Activated B cell treated with CpG ODN at 0.5 μM for 24 hours (primary cell): ENCODE measurements at regions of chr11 and their contacts with region 1.

Region 1: GRCh38 chr11:114439229-114440120 is at the start of gene REXO2:
- DNase-seq: peak; percentile 85
- ATAC-seq: peak; percentile 99
- H3K4me3 Mint-ChIP-seq: peak within 1 kb of the TSS; percentile 97
- H3K27ac Mint-ChIP-seq: peak within 1 kb of the TSS; percentile 87
- H3K4me1 Mint-ChIP-seq: peaks cover 17% of the 10 kb centered on the region
- H3K27me3 Mint-ChIP-seq: no peaks in the 10 kb centered on the region
- CTCF ChIP-seq: no peak
- total RNA-seq, gene REXO2: 26.1 and 27.3 TPM in 2 replicates

Region 2: GRCh38 chr11:114154271-114155047 is 285.0 kb before region 1 on chr11:
- CTCF ChIA-PET with region 1: no interaction called
- POLR2A ChIA-PET with region 1: no interaction called
- intact Hi-C with region 1: no loop called
- DNase-seq: no peak
- ATAC-seq: no peak
- H3K4me3 Mint-ChIP-seq: no peak overlapping the region
- H3K27ac Mint-ChIP-seq: no peak overlapping the region
- H3K4me1 Mint-ChIP-seq: peaks cover 28% of the 10 kb centered on the region
- H3K27me3 Mint-ChIP-seq: no peaks in the 10 kb centered on the region
- CTCF ChIP-seq: no peak

Region 3: DNA sequence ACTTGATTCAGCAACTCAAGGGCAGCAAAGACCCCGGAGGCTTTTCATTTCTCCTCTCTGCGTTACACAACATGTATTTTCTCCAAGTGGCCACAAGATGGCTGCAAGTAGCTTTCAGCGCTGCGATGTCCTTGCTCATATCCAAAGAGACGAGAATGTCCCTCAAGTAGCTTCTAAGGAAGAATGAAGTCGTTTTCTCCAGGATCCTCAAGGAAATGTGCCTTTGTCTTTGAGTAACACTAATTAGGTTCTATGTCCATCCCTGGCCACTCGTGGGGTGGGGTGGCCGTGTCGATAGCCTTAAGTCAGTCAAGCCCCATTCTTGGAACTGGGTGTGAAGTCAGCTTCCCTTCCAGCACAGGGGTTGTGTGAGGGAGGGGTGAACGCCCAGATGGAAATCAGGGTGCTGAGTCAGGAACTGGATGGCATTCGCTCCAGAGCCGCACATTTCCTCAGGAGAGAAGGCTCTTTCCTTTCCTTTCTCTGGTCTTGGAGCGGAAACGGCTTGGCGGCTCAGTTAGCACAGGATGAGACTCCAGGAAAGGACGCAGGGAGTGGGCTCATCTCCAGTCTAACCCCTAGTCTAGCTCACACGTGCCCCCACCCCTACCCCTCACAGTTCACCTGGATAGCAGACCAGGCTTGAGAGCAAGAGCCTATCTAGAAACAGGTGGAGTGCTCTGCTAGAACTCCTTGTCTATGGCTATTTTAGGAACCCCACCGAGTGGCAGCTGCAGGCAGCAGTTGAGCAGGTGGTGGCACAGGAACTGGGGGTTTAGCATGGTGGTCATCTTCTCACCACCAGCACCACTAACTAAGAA is 99.0 kb before region 1 on chr11:
- CTCF ChIA-PET with region 1: no interaction called
- POLR2A ChIA-PET with region 1: no interaction called
- intact Hi-C with region 1: loop called (anchors 2 kb)
- DNase-seq: no peak
- ATAC-seq: peak; percentile 49
- H3K4me3 Mint-ChIP-seq: peak overlapping the region; percentile 42
- H3K27ac Mint-ChIP-seq: no peak overlapping the region
- H3K4me1 Mint-ChIP-seq: peaks cover 5% of the 10 kb centered on the region
- H3K27me3 Mint-ChIP-seq: peaks cover 3% of the 10 kb centered on the region
- CTCF ChIP-seq: peak; percentile 34

Region 4: GRCh38 chr11:114348200-114349191 is 91.0 kb before region 1 on chr11:
- CTCF ChIA-PET with region 1: no interaction called
- POLR2A ChIA-PET with region 1: no interaction called
- intact Hi-C with region 1: loop called (anchors 1 kb)
- DNase-seq: no peak
- ATAC-seq: no peak
- H3K4me3 Mint-ChIP-seq: no peak overlapping the region
- H3K27ac Mint-ChIP-seq: no peak overlapping the region
- H3K4me1 Mint-ChIP-seq: no peaks in the 10 kb centered on the region
- H3K27me3 Mint-ChIP-seq: peaks cover 7% of the 10 kb centered on the region
- CTCF ChIP-seq: peak; percentile 45

Region 5: GRCh38 chr11:114400217-114400914 is 39.1 kb before region 1 on chr11 and contains the starts of genes C11orf71 and RBM7:
- CTCF ChIA-PET with region 1: interaction called, 3 read pairs
- POLR2A ChIA-PET with region 1: interaction called, 4 read pairs
- intact Hi-C with region 1: loop called (anchors 1 kb)
- DNase-seq: peak; percentile 93
- ATAC-seq: peak; percentile 93
- H3K4me3 Mint-ChIP-seq: peak within 1 kb of the TSS; percentile 96
- H3K27ac Mint-ChIP-seq: peak within 1 kb of the TSS; percentile 98
- H3K4me1 Mint-ChIP-seq: peaks cover 50% of the 10 kb centered on the region
- H3K27me3 Mint-ChIP-seq: no peaks in the 10 kb centered on the region
- CTCF ChIP-seq: no peak
- total RNA-seq, gene C11orf71: 9.5 and 11.1 TPM in 2 replicates
- total RNA-seq, gene RBM7: 33.6 and 34.1 TPM in 2 replicates